AG04450 (cell line): ENCODE measurements at regions of chr2 and their contacts with region 1.

Region 1: GRCh38 chr2:140863713-140864112 is 1267.1 kb downstream of the LRP1B start:
- DNase-seq: peak; percentile 29
- H3K4me3 ChIP-seq: no peak overlapping the region
- H3K27ac ChIP-seq: no peak overlapping the region
- H3K27me3 ChIP-seq: no peaks in the 10 kb centered on the region
- CTCF ChIP-seq: peak; percentile 58

Region 2: DNA sequence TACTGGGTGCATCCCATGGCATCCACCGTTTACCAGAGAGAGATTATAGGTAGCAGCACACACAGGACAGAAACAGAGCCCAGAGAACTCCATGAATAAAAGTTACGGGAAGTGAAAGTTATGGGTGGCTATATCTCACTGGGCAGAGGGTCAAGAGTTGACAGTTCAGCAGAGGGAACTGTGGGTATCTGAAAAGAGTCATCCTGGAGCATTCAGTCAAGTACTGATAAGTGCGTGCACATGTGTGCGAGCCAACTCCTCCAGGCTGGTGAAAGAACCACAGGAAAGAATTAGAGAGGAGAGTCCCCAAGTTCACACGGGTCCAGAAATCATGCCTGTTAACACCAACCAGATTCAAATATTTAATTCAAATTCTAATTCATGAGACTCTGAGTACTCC is 321.1 kb before region 1 on chr2:
- CTCF ChIA-PET with region 1: no interaction called
- POLR2A ChIA-PET with region 1: no interaction called
- DNase-seq: no peak
- H3K4me3 ChIP-seq: no peak overlapping the region
- H3K27ac ChIP-seq: no peak overlapping the region
- H3K27me3 ChIP-seq: no peaks in the 10 kb centered on the region
- CTCF ChIP-seq: no peak

Region 3: GRCh38 chr2:140586379-140586778 is 277.3 kb before region 1 on chr2:
- CTCF ChIA-PET with region 1: interaction called, 11 read pairs
- POLR2A ChIA-PET with region 1: no interaction called
- DNase-seq: no peak
- H3K4me3 ChIP-seq: no peak overlapping the region
- H3K27ac ChIP-seq: no peak overlapping the region
- H3K27me3 ChIP-seq: no peaks in the 10 kb centered on the region
- CTCF ChIP-seq: peak; percentile 63

Region 4: GRCh38 chr2:140842110-140842509 is 21.6 kb before region 1 on chr2:
- CTCF ChIA-PET with region 1: interaction called, 12 read pairs
- POLR2A ChIA-PET with region 1: no interaction called
- DNase-seq: no peak
- H3K4me3 ChIP-seq: no peak overlapping the region
- H3K27ac ChIP-seq: no peak overlapping the region
- H3K27me3 ChIP-seq: no peaks in the 10 kb centered on the region
- CTCF ChIP-seq: no peak

Region 5: GRCh38 chr2:140873915-140874531 is 10.3 kb after region 1 on chr2:
- CTCF ChIA-PET with region 1: interaction called, 14 read pairs
- POLR2A ChIA-PET with region 1: no interaction called
- DNase-seq: no peak
- H3K4me3 ChIP-seq: no peak overlapping the region
- H3K27ac ChIP-seq: no peak overlapping the region
- H3K27me3 ChIP-seq: no peaks in the 10 kb centered on the region
- CTCF ChIP-seq: no peak

Region 6: DNA sequence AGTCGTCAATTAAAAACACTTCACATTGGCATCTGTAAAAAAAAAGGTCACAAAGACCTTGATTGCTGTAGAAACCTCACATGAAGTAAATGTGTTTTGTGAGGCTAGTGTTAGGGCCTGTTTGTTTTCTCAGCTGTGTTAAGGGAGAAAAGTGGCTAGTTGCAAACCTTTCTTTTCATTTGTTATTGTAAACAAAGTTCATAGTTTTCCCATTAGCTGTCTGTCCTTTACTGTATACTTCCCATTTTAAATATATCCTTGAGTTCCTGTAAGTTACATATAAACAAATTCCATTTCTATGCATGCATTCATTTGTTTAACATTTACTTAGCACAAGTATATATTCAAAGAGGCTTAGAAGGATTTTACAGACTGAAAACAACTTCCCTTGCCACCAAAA is 16.9 kb after region 1 on chr2:
- CTCF ChIA-PET with region 1: interaction called, 12 read pairs
- POLR2A ChIA-PET with region 1: no interaction called
- DNase-seq: peak; percentile 79
- H3K4me3 ChIP-seq: no peak overlapping the region
- H3K27ac ChIP-seq: no peak overlapping the region
- H3K27me3 ChIP-seq: no peaks in the 10 kb centered on the region
- CTCF ChIP-seq: no peak

Region 7: GRCh38 chr2:140891604-140892212 is 28.0 kb after region 1 on chr2:
- CTCF ChIA-PET with region 1: no interaction called
- POLR2A ChIA-PET with region 1: no interaction called
- DNase-seq: no peak
- H3K4me3 ChIP-seq: no peak overlapping the region
- H3K27ac ChIP-seq: no peak overlapping the region
- H3K27me3 ChIP-seq: no peaks in the 10 kb centered on the region
- CTCF ChIP-seq: peak; percentile 16; the same call in 1 of the 2 replicates